ENCODE measurements at regions of chr7 and their contacts with region 1.

Region 1: GRCh38 chr7:75994388-75995051 is at the start of gene TMEM120A:
- DNase-seq: peak; percentile 86 to 98 (median 92)
- H3K4me3 ChIP-seq: peak within 1 kb of the TSS; percentile 58 to 98 (median 91)
- H3K27ac ChIP-seq: peak within 1 kb of the TSS; percentile 58 to 97 (median 90)
- H3K27me3 ChIP-seq: no peaks in the 10 kb centered on the region
- CTCF ChIP-seq: peak in 45 of 56 donors; percentile 4 to 59 (median 39)
- total RNA-seq, gene TMEM120A: 32.6 to 87.9 (median 49.5) TPM

Region 2: DNA sequence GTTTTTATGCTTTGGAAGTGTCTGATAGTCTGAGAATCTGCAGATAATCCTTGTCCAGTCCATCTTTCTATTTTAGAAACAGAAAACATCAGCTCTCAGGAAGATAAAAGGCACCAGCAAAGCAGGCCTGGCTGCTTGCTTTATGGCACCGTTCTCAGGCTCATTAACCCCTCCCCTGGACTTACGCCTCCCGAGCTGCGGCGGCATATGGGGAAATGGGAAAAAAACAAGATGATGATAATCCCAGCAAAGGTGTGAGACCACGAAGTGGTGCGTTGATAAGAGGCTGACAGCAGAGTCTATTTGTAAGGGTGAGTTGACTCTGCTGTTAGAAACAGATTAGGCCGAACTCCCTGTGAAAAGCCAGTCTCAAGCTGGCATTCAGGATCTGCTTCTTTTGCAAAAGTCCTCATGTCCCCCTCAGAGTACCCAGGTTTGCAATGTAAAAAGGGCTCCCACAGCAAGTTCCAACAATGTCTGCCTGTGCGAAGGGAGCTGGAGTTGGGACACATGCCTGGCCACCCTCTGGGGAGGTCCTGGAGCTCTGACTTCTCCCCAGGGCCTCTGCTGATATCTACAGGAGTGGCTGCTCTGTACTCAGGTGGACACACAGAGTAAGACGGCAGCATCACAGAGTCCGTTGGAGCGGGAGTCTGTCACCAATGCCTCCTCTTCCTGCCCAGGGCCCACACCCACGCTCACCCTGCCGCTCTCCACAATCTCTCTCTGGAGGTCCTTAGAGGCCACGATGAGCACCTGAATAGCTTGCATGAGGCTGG is 448.1 kb before region 1 on chr7:
- intact Hi-C with region 1: no loop called
- DNase-seq: no peak
- H3K4me3 ChIP-seq: no peak overlapping the region
- H3K27ac ChIP-seq: peak overlapping the region in 1 of 59 donors; percentile 24
- H3K27me3 ChIP-seq: no peaks in the 10 kb centered on the region
- CTCF ChIP-seq: no peak

Region 3: DNA sequence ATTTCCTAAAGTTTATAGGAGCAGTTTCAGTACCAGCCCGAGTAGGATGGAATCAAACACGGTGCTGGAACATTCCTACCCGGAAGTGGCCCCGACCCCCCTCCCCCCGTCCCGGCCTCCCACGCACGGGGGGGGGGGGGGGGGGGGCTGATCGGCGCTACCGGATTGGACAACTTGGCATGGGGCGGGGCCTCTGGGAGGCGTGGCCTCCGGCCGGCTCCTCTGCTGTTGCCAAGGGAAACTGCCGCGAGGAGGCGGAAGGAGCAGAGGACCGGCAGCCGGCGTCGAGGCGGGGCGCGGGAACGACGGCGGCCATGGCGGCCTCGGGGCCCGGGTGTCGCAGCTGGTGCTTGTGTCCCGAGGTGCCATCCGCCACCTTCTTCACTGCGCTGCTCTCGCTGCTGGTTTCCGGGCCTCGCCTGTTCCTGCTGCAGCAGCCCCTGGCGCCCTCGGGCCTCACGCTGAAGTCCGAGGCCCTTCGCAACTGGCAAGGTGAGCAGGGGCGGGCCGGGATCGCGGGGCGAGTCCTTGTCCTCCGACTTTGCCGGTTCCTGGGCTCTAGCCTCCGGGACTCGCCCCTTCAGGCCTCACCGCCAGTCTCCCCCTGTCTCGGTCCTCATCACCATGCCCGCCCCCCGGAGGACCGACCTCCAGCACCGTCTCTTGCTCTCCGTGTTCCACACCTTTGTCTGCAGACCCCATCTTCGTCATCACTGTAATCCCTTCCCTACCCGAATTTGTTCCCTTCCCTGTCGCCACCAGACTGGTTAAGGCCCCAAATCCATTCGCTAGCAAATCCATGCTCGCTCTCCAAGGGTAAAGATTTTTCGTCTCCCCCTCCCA is 115.5 kb before region 1 on chr7 and contains the start of gene RHBDD2:
- intact Hi-C with region 1: loop called (anchors 2 to 5 kb)
- DNase-seq: peak; percentile 88 to 96 (median 95)
- H3K4me3 ChIP-seq: peak within 1 kb of the TSS; percentile 70 to 99 (median 95)
- H3K27ac ChIP-seq: peak within 1 kb of the TSS; percentile 73 to 99 (median 96)
- H3K27me3 ChIP-seq: no peaks in the 10 kb centered on the region
- CTCF ChIP-seq: peak in 50 of 56 donors; percentile 10 to 67 (median 40)
- total RNA-seq, gene RHBDD2: 127 to 309 (median 221) TPM

Region 4: GRCh38 chr7:76069238-76069638 is 74.7 kb after region 1 on chr7:
- intact Hi-C with region 1: no loop called
- DNase-seq: peak in 9 of 10 donors; percentile 43 to 86 (median 71)
- H3K4me3 ChIP-seq: peak overlapping the region in 2 of 59 donors; percentile 10
- H3K27ac ChIP-seq: peak overlapping the region in 47 of 59 donors; percentile 2 to 83 (median 54)
- H3K27me3 ChIP-seq: no peaks in the 10 kb centered on the region
- CTCF ChIP-seq: peak in 4 of 56 donors; percentile 9 to 24 (median 14)